Heart left ventricle (tissue), 16 donors: ENCODE measurements at regions of chr5 and their contacts with region 1.

Region 1: DNA sequence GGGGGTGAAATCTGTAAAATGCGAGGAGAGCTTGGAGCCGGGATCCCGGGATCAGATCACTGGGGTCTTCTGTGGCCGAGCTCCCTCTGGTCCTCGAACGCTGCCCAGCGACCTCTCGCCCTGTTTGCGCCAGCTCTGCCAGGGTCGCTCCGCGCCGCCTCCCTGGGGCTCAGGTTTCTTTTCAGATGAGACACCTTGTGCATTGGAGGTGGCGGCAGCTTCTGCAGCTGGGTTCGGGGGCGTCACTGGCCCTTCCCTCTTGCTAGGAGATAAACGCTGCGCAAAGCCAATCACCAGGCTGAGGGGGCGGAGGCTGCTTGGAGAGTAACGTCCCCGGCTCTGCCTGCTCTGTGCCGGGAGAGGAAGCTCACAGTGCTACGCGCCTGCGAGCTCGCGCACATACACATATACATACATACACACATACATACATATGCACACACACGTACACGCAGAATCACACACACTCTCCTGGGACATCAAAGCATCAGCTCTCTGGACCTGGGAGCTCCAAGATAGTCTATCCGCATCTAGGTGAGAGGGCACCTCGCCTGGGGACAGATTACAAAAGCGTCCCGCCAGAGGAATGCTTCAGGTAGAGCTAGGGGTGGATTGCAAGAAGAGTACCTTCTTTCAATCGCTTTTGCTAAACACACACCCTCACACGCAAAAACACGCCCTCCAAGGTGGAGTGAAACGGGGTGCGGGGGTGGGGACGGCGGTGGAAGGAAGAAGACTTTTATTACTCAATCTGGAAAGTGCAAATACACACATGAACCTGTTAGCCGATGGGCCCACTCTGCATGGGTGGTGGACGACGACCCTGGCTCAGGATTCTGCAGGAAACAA is at the start of gene ST8SIA4:
- DNase-seq: peak; percentile 88 to 93 (median 90)
- ATAC-seq: peak; percentile 74 to 91 (median 89)
- H3K4me3 ChIP-seq: peak within 1 kb of the TSS; percentile 40 to 81 (median 66)
- H3K27ac ChIP-seq: peak within 1 kb of the TSS in 11 of 12 donors; percentile 38 to 97 (median 84)
- H3K4me1 ChIP-seq: peaks cover 0 to 37% (median 3%) of the 10 kb centered on the region in 12 donors
- H3K27me3 ChIP-seq: peaks cover 0 to 5% (median 0%) of the 10 kb centered on the region in 9 donors
- CTCF ChIP-seq: no peak
- POLR2A ChIP-seq: peak in 1 of 2 donors; percentile 74
- total RNA-seq, gene ST8SIA4: 1.6 to 17.7 (median 4.5) TPM

Region 2: DNA sequence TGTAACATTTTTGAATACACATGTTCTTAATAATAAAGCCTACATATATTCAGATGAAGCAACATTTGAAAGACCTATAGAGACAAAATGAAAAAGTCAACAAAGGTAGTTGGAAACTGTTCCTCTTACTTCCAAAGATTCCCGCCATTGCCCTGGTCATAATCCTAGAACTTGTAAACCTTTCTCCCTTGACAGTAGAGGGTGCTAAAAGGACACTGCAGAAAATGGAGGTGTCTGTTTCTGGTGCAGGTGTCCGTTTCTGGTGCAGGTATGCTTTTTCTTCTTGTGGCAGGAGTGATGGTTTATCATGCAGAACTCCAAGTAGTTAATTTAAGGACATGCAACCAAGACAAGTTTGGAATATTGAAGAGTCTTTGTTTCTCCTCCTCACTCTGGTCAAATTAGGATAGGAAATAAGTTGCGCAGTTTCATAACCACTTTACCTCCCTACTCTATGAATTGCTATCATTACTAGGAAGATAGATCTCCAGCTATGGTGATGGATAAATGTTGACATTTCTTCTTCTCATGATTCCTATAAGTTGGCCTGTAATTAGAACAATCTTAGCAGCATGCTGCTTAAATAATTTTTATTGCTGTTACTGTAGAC is 424.1 kb before region 1 on chr5:
- intact Hi-C with region 1: loop called in 1 of 10 experiments (anchors 5 kb)
- DNase-seq: no peak
- ATAC-seq: no peak
- H3K4me3 ChIP-seq: no peak overlapping the region
- H3K27ac ChIP-seq: no peak overlapping the region
- H3K4me1 ChIP-seq: no peaks in the 10 kb centered on the region
- H3K27me3 ChIP-seq: no peaks in the 10 kb centered on the region
- CTCF ChIP-seq: peak; percentile 21 to 51 (median 30)
- POLR2A ChIP-seq: no peak

Region 3: DNA sequence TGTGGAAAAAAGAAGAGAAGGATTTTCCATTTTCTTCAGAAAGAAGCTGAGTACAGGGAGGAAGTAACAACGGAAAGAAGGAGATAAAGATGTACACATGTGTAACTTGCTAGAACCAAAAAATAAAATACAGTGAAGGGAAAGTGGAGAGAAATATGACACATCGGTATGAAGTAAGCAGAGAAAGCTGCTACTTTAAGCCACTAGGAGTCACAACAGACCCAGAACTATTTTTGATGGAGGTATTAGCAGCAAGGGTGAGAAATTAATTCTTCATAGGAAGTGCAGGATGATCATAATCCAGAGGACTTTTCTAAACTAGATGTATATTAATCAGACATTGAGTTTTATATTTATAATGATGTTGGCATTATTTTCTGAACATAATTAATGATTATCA is 279.5 kb before region 1 on chr5:
- intact Hi-C with region 1: loop called in 1 of 10 experiments (anchors 10 kb)
- DNase-seq: no peak
- ATAC-seq: no peak
- H3K4me3 ChIP-seq: no peak overlapping the region
- H3K27ac ChIP-seq: no peak overlapping the region
- H3K4me1 ChIP-seq: no peaks in the 10 kb centered on the region
- H3K27me3 ChIP-seq: no peaks in the 10 kb centered on the region
- CTCF ChIP-seq: peak; percentile 18 to 68 (median 47)
- POLR2A ChIP-seq: no peak

Region 4: GRCh38 chr5:100777680-100778281 is 125.5 kb before region 1 on chr5:
- intact Hi-C with region 1: loop called in 2 of 10 experiments (anchors 10 kb)
- DNase-seq: peak in 3 of 5 donors; percentile 35 to 49 (median 47)
- ATAC-seq: peak in 3 of 4 donors; percentile 56 to 66 (median 63)
- H3K4me3 ChIP-seq: peak overlapping the region in 3 of 12 donors; percentile 13 to 19 (median 18)
- H3K27ac ChIP-seq: peak overlapping the region in 4 of 12 donors; percentile 27 to 91 (median 38)
- H3K4me1 ChIP-seq: peaks cover 0 to 39% (median 0%) of the 10 kb centered on the region in 12 donors
- H3K27me3 ChIP-seq: no peaks in the 10 kb centered on the region
- CTCF ChIP-seq: no peak
- POLR2A ChIP-seq: no peak

Region 5: GRCh38 chr5:100827481-100827889 is 75.8 kb before region 1 on chr5:
- intact Hi-C with region 1: loop called in 1 of 10 experiments (anchors 5 kb)
- DNase-seq: peak in 2 of 5 donors; percentile 12 to 43
- ATAC-seq: peak; percentile 47 to 72 (median 61)
- H3K4me3 ChIP-seq: no peak overlapping the region
- H3K27ac ChIP-seq: peak overlapping the region in 7 of 12 donors; percentile 6 to 90 (median 54)
- H3K4me1 ChIP-seq: peaks cover 0 to 51% (median 13%) of the 10 kb centered on the region in 12 donors
- H3K27me3 ChIP-seq: no peaks in the 10 kb centered on the region
- CTCF ChIP-seq: no peak
- POLR2A ChIP-seq: no peak

Region 6: GRCh38 chr5:100852988-100853449 is 50.2 kb before region 1 on chr5:
- intact Hi-C with region 1: loop called in 3 of 10 experiments (anchors 5 kb)
- DNase-seq: no peak
- ATAC-seq: no peak
- H3K4me3 ChIP-seq: no peak overlapping the region
- H3K27ac ChIP-seq: peak overlapping the region in 4 of 12 donors; percentile 13 to 86 (median 26)
- H3K4me1 ChIP-seq: peaks cover 0 to 54% (median 3%) of the 10 kb centered on the region in 12 donors
- H3K27me3 ChIP-seq: no peaks in the 10 kb centered on the region
- CTCF ChIP-seq: no peak
- POLR2A ChIP-seq: no peak

Region 7: DNA sequence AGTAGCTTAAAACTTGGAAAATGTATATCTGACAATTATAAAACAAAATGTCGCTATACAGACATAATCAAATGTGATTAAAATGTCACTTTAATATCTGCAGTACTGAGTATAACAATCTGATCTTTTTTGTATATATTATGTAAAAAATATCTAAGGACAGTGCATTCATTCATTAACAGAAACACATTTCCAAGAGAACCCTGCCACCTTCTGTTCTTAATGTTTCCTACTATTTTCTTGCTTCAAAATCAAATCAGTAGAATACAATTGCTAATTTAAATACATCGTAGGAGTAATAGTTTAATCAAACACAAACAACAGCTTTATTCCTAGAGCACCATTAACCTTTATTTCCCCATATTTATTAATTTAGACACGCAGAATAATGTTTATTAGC is 142.4 kb after region 1 on chr5:
- intact Hi-C with region 1: loop called in 1 of 10 experiments (anchors 10 kb)
- DNase-seq: no peak
- ATAC-seq: no peak
- H3K4me3 ChIP-seq: no peak overlapping the region
- H3K27ac ChIP-seq: no peak overlapping the region
- H3K4me1 ChIP-seq: no peaks in the 10 kb centered on the region
- H3K27me3 ChIP-seq: no peaks in the 10 kb centered on the region
- CTCF ChIP-seq: peak in 10 of 12 donors; percentile 13 to 50 (median 32)
- POLR2A ChIP-seq: no peak